ENCODE measurements at regions of chr11 and their contacts with region 1.

Region 1: GRCh38 chr11:34357701-34358257 is at the start of gene ABTB2:
- DNase-seq: peak; percentile 99
- H3K4me3 ChIP-seq: peak within 1 kb of the TSS; percentile 64 to 79 (median 68)
- H3K27ac ChIP-seq: peak within 1 kb of the TSS; percentile 84 to 90 (median 86)
- H3K4me1 ChIP-seq: peaks cover 27 to 46% (median 39%) of the 10 kb centered on the region in 4 donors
- H3K27me3 ChIP-seq: peaks cover 0 to 3% (median 0%) of the 10 kb centered on the region in 4 donors
- CTCF ChIP-seq: no peak
- EP300 ChIP-seq: no peak
- POLR2A ChIP-seq: peak; percentile 76
- total RNA-seq, gene ABTB2: 5.0 to 8.0 (median 7.2) TPM

Region 2: GRCh38 chr11:33899383-33900037 is 458.3 kb before region 1 on chr11:
- intact Hi-C with region 1: no loop called
- DNase-seq: peak; percentile 94
- H3K4me3 ChIP-seq: peak overlapping the region in 1 of 4 donors; percentile 18
- H3K27ac ChIP-seq: peak overlapping the region; percentile 46 to 63 (median 55)
- H3K4me1 ChIP-seq: peaks cover 5 to 22% (median 18%) of the 10 kb centered on the region in 4 donors
- H3K27me3 ChIP-seq: no peaks in the 10 kb centered on the region
- CTCF ChIP-seq: no peak
- EP300 ChIP-seq: no peak
- POLR2A ChIP-seq: no peak

Region 3: GRCh38 chr11:33996498-33997454 is 361.0 kb before region 1 on chr11:
- intact Hi-C with region 1: loop called (anchors 2 kb)
- DNase-seq: no peak
- H3K4me3 ChIP-seq: peak overlapping the region in 2 of 4 donors; percentile 12 to 31
- H3K27ac ChIP-seq: no peak overlapping the region
- H3K4me1 ChIP-seq: peaks cover 5 to 15% (median 11%) of the 10 kb centered on the region in 4 donors
- H3K27me3 ChIP-seq: peaks cover 0 to 6% (median 0%) of the 10 kb centered on the region in 4 donors
- CTCF ChIP-seq: peak; percentile 75 to 88 (median 76)
- EP300 ChIP-seq: no peak
- POLR2A ChIP-seq: no peak

Region 4: GRCh38 chr11:34214961-34215805 is 142.6 kb before region 1 on chr11:
- intact Hi-C with region 1: no loop called
- DNase-seq: no peak
- H3K4me3 ChIP-seq: no peak overlapping the region
- H3K27ac ChIP-seq: no peak overlapping the region
- H3K4me1 ChIP-seq: no peaks in the 10 kb centered on the region
- H3K27me3 ChIP-seq: no peaks in the 10 kb centered on the region
- CTCF ChIP-seq: no peak
- EP300 ChIP-seq: no peak
- POLR2A ChIP-seq: no peak